Cardiac septum (tissue), 1 donor: ENCODE measurements at regions of chr19 and their contacts with region 1.

Region 1: DNA sequence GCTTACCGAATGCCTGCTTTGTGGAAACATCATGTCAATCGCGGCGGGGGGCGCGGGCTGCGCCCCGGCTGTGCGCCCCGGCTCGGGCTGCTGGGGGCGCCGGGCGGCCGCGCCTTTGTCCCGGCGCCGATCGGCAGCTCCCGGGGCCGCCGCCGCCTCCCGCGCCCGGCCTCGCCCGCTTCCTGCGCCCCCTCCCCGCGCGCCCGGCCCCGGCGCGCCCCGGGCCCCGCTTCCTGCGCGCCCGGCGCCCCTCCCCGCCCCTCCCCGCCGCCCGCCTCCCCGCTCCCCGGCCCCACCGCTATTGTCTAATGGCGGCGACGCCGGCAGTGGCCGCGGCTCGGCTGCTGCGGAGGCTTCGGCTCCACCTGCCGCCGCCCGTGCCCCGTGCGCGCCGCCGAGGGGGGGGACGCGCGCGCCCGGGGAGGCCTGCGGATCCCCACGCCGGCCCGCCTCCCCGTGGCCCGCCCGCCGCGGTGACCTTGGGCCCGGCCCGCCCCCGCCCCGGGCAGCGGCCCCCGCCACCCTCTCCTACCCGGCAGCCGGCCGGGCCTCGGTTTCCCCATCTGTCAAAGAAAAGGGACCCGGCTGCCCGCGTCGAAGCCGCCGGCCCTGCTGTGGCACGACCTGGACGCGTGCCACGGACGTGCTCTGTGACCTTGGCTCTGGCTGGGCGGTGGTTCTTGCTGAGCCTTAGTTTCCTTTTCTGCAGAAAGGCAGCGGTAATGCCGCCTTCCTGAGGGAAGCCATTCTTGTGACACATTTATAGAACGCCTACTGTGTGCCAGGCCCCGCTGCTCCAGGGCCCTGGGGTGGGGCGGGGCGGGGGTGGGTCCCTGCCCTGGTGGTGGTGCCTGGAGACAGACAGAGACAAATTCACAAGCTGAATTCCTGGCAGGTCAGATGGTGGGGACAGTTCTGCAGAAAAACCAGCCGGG is at the start of gene TLE5:
- DNase-seq: peak; percentile 82
- total RNA-seq, gene TLE5: 804 TPM

Region 2: DNA sequence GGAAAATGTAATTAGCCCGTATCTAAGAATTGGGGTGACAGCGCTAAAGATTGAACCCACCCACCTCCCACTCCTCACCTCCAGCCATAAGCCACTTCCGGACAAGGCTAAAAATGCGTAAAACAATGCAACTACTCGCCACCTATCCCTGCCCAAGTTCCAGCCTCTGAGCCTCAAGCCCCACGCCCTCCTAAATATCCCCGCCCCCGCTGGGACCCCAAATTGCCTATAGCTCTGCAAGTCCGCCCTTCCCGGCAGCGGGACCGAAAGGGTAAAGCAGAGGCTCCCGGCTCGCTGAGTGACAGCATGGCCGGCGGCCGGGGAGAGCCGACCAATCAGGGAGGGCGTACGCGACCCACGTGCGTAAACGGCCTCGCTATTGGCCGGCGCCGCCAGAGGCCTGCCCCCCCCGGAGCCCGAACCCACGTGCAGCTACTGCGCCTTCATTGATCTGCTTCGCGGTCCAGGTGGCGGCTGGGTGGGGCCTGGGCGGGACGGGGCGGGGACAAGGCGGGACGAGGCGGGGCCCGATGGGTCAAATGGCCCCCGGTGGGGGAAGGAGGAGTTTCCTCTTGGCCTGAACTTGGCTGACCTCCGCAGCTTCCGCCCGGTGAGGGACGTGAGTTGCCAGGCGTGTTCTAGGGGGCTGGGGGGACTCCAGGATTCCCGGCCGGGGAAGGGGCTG is 85.3 kb before region 1 on chr19 and contains the start of gene TLE6:
- intact Hi-C with region 1: loop called (anchors 5 kb)
- DNase-seq: peak; percentile 96
- total RNA-seq, gene TLE6: 1.0 TPM

Region 3: GRCh38 chr19:3035542-3036118 is 26.8 kb before region 1 on chr19:
- intact Hi-C with region 1: loop called (anchors 2 kb)
- DNase-seq: peak; percentile 97

Region 4: GRCh38 chr19:3094601-3095437 is 32.4 kb after region 1 on chr19:
- intact Hi-C with region 1: loop called (anchors 5 kb)
- DNase-seq: no peak

Region 5: GRCh38 chr19:3142292-3142670 is 79.8 kb after region 1 on chr19:
- intact Hi-C with region 1: no loop called
- DNase-seq: no peak